CD4-positive, alpha-beta T cell (primary cell): ENCODE measurements at regions of chr9 and their contacts with region 1.

Region 1: DNA sequence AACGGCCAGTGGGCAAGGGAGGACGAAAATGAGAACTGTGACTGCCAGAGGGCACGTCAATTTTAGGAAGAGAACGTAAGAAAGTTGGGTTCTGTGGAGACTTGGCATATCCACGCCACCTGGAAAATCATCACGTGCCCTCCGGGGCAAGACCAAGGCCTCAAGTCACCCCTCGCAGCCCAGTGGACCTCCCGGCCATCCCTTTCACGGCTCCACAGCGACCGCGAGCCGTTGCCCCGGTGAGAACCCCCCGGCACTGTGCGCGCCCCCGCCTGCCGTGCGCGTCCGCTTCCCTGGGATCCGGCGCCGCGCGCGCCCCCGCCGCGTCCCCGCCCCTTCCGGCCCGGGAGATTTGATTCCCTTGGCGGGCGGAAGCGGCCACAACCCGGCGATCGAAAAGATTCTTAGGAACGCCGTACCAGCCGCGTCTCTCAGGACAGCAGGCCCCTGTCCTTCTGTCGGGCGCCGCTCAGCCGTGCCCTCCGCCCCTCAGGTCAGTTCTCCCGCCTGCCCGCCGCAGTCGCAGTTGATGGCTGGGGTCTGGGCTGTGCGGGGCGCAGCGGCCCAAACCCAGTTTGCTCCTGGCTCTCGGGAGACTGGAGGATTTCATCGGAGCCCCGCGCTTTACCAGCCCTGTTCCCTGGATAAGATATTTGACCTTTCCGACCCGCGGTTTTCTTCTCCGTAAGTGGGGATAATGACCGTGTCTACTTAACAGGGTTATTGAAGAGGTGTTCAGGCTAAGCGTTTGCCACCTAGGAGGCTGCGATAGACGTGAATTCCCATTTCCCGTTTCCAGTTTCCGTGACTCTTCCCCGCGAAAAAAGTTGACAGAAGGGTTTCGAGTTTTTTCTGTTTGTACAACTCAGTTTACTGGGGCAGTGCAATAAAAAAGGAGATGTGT is at the start of gene MELK:
- DNase-seq: peak; percentile 67 to 89 (median 80)
- ATAC-seq: peak; percentile 79
- H3K4me3 ChIP-seq: peak within 1 kb of the TSS; percentile 92
- H3K4me3 Mint-ChIP-seq: peak within 1 kb of the TSS; percentile 92
- H3K27ac ChIP-seq: peak within 1 kb of the TSS; percentile 46 to 69
- H3K27ac Mint-ChIP-seq: peak within 1 kb of the TSS; percentile 68
- H3K4me1 ChIP-seq: peaks cover 19% of the 10 kb centered on the region
- H3K4me1 Mint-ChIP-seq: peaks cover 25% of the 10 kb centered on the region
- H3K27me3 ChIP-seq: no peaks in the 10 kb centered on the region
- H3K27me3 Mint-ChIP-seq: no peaks in the 10 kb centered on the region
- CTCF ChIP-seq: no peak
- total RNA-seq, gene MELK: 0.42 to 0.47 TPM

Region 2: DNA sequence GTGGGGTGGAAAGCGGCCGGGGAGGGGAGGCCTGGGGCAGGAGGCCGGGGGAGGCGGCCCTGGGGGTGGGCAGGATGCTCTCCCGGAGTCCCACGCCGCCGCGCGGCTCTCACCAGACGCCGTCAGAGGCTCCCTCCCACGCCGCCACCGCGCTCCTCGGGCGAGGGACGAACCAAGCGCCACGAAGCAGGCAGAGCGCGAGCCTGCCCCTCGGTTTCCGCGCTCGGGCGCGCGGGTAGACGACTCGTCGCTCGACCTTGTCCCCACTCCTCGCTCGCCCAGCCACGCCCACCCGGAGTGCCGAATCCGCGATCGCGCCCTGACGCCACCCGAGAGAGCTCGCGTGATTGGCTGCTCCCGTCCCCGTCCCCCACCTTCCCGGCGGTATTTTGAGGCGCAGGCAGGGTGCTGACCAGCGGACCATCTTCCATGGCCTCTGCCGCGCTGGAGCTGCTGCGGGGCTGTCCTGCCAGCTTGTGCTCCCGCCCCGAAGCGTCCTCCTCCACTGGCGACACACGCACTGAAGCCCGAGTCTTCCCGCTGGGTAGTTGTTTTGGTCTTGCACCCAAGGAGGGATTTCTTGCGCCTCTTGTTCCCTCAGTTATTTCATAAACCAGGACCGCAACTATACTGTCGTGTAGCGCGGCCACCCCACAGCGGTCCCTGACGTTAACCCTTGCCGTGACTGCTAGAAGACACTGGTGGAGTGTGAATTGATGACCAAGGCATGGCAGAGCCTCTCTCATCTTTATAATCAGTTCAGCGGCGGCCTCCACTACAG is 314.4 kb before region 1 on chr9 and contains the start of gene GNE:
- CTCF ChIA-PET with region 1: no interaction called
- POLR2A ChIA-PET with region 1: no interaction called
- intact Hi-C with region 1: loop called in 1 of 2 experiments (anchors 2 kb)
- DNase-seq: peak; percentile 94 to 98 (median 97)
- ATAC-seq: peak; percentile 89
- H3K4me3 ChIP-seq: peak within 1 kb of the TSS; percentile 66
- H3K4me3 Mint-ChIP-seq: peak within 1 kb of the TSS; percentile 99
- H3K27ac ChIP-seq: peak within 1 kb of the TSS; percentile 88 to 93
- H3K27ac Mint-ChIP-seq: peak within 1 kb of the TSS; percentile 91
- H3K4me1 ChIP-seq: peaks cover 19% of the 10 kb centered on the region
- H3K4me1 Mint-ChIP-seq: peaks cover 6% of the 10 kb centered on the region
- H3K27me3 ChIP-seq: no peaks in the 10 kb centered on the region
- H3K27me3 Mint-ChIP-seq: no peaks in the 10 kb centered on the region
- CTCF ChIP-seq: no peak
- total RNA-seq, gene GNE: 12.5 to 14.6 TPM

Region 3: GRCh38 chr9:36612946-36613345 is 40.2 kb after region 1 on chr9:
- CTCF ChIA-PET with region 1: no interaction called
- POLR2A ChIA-PET with region 1: no interaction called
- intact Hi-C with region 1: no loop called
- DNase-seq: no peak
- ATAC-seq: no peak
- H3K4me3 ChIP-seq: no peak overlapping the region
- H3K4me3 Mint-ChIP-seq: no peak overlapping the region
- H3K27ac ChIP-seq: no peak overlapping the region
- H3K27ac Mint-ChIP-seq: no peak overlapping the region
- H3K4me1 ChIP-seq: no peaks in the 10 kb centered on the region
- H3K4me1 Mint-ChIP-seq: no peaks in the 10 kb centered on the region
- H3K27me3 ChIP-seq: no peaks in the 10 kb centered on the region
- H3K27me3 Mint-ChIP-seq: no peaks in the 10 kb centered on the region
- CTCF ChIP-seq: no peak

Region 4: GRCh38 chr9:36772450-36773403 is 200.0 kb after region 1 on chr9:
- CTCF ChIA-PET with region 1: no interaction called
- POLR2A ChIA-PET with region 1: no interaction called
- intact Hi-C with region 1: no loop called
- DNase-seq: no peak
- ATAC-seq: no peak
- H3K4me3 ChIP-seq: no peak overlapping the region
- H3K4me3 Mint-ChIP-seq: no peak overlapping the region
- H3K27ac ChIP-seq: no peak overlapping the region
- H3K27ac Mint-ChIP-seq: no peak overlapping the region
- H3K4me1 ChIP-seq: no peaks in the 10 kb centered on the region
- H3K4me1 Mint-ChIP-seq: no peaks in the 10 kb centered on the region
- H3K27me3 ChIP-seq: peaks cover 2 to 5% of the 10 kb centered on the region in 2 experiments
- H3K27me3 Mint-ChIP-seq: peaks cover 51% of the 10 kb centered on the region
- CTCF ChIP-seq: no peak